ENCODE measurements at regions of chr5 and their contacts with region 1.

Region 1: GRCh38 chr5:1479581-1480188 is 34.4 kb upstream of the SLC6A3 start:
- DNase-seq: peak; percentile 31 to 40
- ATAC-seq: peak; percentile 35 to 58; a peak in 5 of 6 replicates
- H3K4me3 ChIP-seq: no peak overlapping the region
- H3K27ac ChIP-seq: peak overlapping the region; percentile 26 to 57; a peak in 4 of 6 replicates
- H3K4me1 ChIP-seq: peaks cover 21% of the 10 kb centered on the region
- CTCF ChIP-seq: peak; percentile 69
- EP300 ChIP-seq: no peak
- POLR2A ChIP-seq: no peak
- RAD21 ChIP-seq: peak; percentile 54 to 56

Region 2: DNA sequence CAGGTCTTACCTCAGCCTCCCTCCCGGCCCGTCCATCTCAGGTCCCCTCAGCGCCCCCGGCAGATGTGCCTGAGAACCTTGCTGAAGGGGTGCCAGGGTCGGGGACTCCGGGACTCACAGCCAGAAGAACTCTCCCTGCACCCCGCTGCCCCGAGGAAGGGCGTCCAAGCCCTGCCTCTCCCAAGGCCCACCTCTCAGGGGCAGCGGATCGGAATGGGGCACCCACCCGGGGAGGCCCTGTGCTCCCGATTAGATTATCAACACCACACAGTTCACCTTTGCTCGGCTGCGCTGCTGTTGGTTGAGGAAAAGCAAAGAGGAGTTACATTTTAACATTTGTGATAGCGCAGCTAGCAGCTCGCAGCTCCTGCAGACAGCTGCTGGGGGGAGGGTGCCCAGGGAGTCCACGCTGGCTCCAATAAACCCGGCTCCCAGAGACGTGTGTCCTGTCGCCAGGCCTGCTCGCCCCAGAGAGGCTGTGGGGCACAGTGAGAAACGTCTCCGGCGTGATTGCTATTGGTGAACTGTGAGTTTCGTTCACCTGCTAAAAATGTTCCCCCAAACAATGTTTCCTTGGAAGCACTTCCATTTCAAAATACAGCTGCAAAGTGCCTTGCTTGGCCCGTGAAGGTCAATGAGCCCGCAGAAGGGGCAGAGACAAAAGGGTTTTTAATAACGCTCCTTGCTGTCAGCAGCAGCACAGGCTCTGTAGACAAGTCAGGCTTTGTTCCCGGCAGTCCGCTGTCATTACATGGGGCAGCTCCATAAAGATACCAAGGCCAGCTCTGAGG is 296.9 kb before region 1 on chr5:
- CTCF ChIA-PET with region 1: no interaction called
- POLR2A ChIA-PET with region 1: no interaction called
- DNase-seq: no peak
- ATAC-seq: no peak; a peak in 1 of 6 replicates
- H3K4me3 ChIP-seq: no peak overlapping the region
- H3K27ac ChIP-seq: no peak overlapping the region
- H3K4me1 ChIP-seq: no peaks in the 10 kb centered on the region
- CTCF ChIP-seq: no peak
- EP300 ChIP-seq: no peak
- POLR2A ChIP-seq: no peak
- RAD21 ChIP-seq: no peak

Region 3: DNA sequence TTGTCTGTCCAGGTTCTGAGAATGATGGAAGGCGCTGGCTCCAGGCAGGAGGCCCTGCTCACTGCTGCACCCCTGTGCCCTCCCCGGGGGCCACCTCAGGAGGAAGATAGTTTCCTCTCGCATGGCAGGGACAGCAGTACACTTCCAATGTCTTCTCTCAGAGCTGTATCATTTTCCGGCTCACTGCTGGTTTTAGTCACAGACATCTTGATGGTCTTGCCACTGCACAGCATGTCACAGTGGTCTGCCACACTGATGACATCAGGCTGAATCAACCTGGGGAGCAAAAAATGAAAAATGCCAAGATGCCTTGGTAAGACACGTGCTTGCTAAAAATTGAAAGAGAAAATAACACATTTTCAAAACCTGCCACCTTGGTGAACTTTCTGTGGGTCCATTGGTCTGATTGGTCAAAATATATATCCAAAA is 31.1 kb before region 1 on chr5:
- CTCF ChIA-PET with region 1: no interaction called
- POLR2A ChIA-PET with region 1: no interaction called
- DNase-seq: no peak
- ATAC-seq: no peak
- H3K4me3 ChIP-seq: no peak overlapping the region
- H3K27ac ChIP-seq: no peak overlapping the region
- H3K4me1 ChIP-seq: peaks cover 9% of the 10 kb centered on the region; the same call in 1 of the 3 replicates
- CTCF ChIP-seq: no peak
- EP300 ChIP-seq: no peak
- POLR2A ChIP-seq: no peak
- RAD21 ChIP-seq: no peak

Region 4: DNA sequence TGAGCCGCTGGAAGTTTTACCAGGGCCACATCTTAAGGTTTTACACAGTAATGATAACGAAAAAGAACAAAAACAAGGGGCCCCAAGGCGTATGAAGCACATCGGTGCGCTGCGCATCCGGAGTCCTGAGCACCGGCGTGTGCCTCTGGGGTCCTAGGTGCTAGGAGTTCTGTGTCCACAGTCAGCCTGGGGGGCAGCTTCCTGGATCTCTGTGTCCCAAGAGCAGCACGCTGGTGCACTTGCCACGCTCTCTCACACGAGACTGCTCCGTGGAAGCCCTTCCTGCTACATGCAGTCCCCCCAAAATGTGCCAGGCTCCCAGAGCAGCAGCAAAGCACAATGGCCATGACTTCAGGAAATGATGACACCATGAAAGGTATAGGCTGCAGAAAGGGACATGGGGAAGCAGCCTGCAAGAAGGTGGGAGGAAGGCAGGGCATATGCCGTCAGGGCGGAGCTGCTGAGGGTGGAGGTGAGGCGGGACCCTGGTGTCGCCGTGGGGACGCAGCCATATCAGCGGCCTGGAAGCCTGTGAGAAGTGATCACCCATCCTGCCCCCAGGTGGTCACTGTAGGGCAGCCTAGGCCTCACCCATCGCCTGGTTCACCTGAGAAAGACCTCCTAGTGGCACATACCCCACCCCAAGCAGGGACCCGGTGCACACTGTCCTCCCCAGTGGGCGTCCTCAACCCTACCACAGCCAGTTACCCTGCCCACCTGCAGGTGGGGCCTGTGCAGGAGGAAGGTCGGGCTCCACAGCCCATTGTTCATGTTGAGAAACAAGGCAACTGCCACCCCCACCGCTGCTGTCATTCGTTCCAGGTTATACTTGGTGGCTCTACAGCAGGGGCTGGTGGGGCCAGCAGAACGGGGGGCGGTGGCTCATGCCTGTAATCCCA is 10.8 kb before region 1 on chr5:
- CTCF ChIA-PET with region 1: interaction called, 23 read pairs
- POLR2A ChIA-PET with region 1: no interaction called
- DNase-seq: no peak
- ATAC-seq: no peak
- H3K4me3 ChIP-seq: no peak overlapping the region
- H3K27ac ChIP-seq: peak overlapping the region in 1 of 2 experiments; percentile 68; a peak in 2 of 6 replicates
- H3K4me1 ChIP-seq: peaks cover 17% of the 10 kb centered on the region
- CTCF ChIP-seq: no peak
- EP300 ChIP-seq: no peak
- POLR2A ChIP-seq: no peak
- RAD21 ChIP-seq: no peak

Region 5: GRCh38 chr5:1503241-1504068 is 23.8 kb after region 1 on chr5:
- CTCF ChIA-PET with region 1: interaction called, 10 read pairs
- POLR2A ChIA-PET with region 1: no interaction called
- DNase-seq: no peak
- ATAC-seq: no peak
- H3K4me3 ChIP-seq: no peak overlapping the region
- H3K27ac ChIP-seq: no peak overlapping the region
- H3K4me1 ChIP-seq: no peaks in the 10 kb centered on the region
- CTCF ChIP-seq: no peak
- EP300 ChIP-seq: no peak
- POLR2A ChIP-seq: no peak
- RAD21 ChIP-seq: no peak

Region 6: GRCh38 chr5:1548701-1549474 is 69.2 kb after region 1 on chr5:
- CTCF ChIA-PET with region 1: no interaction called
- POLR2A ChIA-PET with region 1: no interaction called
- DNase-seq: no peak
- ATAC-seq: no peak
- H3K4me3 ChIP-seq: no peak overlapping the region
- H3K27ac ChIP-seq: peak overlapping the region in 1 of 2 experiments; percentile 25; a peak in 2 of 6 replicates
- H3K4me1 ChIP-seq: peaks cover 17% of the 10 kb centered on the region; the same call in 2 of the 3 replicates
- CTCF ChIP-seq: no peak
- EP300 ChIP-seq: no peak
- POLR2A ChIP-seq: no peak
- RAD21 ChIP-seq: no peak

Measured in A549 (cell line).